ENCODE measurements at regions of chr11 and their contacts with region 1.

Region 1: GRCh38 chr11:62591448-62592145 is at the start of gene TUT1:
- DNase-seq: peak; percentile 98
- total RNA-seq, gene TUT1: 10.7 to 14.1 TPM

Region 2: GRCh38 chr11:62560566-62561103 is 31.0 kb before region 1 on chr11:
- intact Hi-C with region 1: no loop called
- DNase-seq: peak; percentile 96

Region 3: GRCh38 chr11:62573592-62574362 is 17.8 kb before region 1 on chr11 and contains the start of gene EEF1G:
- intact Hi-C with region 1: loop called in 1 of 2 experiments (anchors 2 kb)
- DNase-seq: peak; percentile 99
- total RNA-seq, gene EEF1G: 706 to 749 TPM